ENCODE measurements at regions of chr2 and their contacts with region 1.

Region 1: DNA sequence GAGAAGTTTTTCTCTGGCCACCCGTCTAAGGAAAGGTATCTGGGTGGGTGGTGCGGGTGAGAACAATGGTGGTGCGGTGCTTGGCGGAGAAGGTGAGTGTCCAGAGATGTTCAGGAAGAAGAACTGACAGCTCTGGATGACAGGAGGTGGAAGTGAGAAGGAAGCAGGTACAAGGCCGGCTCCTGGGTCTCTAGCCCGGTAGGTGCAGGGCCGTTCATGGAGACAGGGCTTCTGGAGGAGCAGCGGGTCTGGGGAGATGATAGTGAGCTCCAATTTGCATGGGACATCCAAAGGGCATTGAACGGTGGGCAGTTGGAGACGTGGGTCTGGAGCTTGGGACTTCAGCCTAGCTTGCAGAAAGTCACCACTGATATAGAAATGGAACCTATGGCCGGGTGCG is 979 bp upstream of the FAHD2B start:
- DNase-seq: no peak
- ATAC-seq: no peak
- H3K4me3 ChIP-seq: no peak overlapping the region
- H3K27ac ChIP-seq: no peak overlapping the region
- H3K4me1 ChIP-seq: peaks cover 4% of the 10 kb centered on the region; the same call in 1 of the 2 replicates
- H3K27me3 ChIP-seq: peaks cover 4% of the 10 kb centered on the region; the same call in 1 of the 2 replicates
- CTCF ChIP-seq: no peak
- POLR2A ChIP-seq: no peak
- RAD21 ChIP-seq: no peak

Region 2: GRCh38 chr2:97011977-97012565 is 83.6 kb before region 1 on chr2:
- CTCF ChIA-PET with region 1: no interaction called
- POLR2A ChIA-PET with region 1: no interaction called
- dilution Hi-C with region 1: no loop called
- in situ Hi-C with region 1: loop called (anchors 25 kb)
- intact Hi-C with region 1: no loop called
- DNase-seq: peak; percentile 70
- ATAC-seq: no peak
- H3K4me3 ChIP-seq: no peak overlapping the region
- H3K27ac ChIP-seq: no peak overlapping the region
- H3K4me1 ChIP-seq: no peaks in the 10 kb centered on the region
- H3K27me3 ChIP-seq: peaks cover 14% of the 10 kb centered on the region
- CTCF ChIP-seq: peak; percentile 49
- POLR2A ChIP-seq: no peak
- RAD21 ChIP-seq: peak; percentile 30; the same call in 1 of the 2 replicates